Heart left ventricle (tissue), 16 donors: ENCODE measurements at regions of chr2 and their contacts with region 1.

Region 1: DNA sequence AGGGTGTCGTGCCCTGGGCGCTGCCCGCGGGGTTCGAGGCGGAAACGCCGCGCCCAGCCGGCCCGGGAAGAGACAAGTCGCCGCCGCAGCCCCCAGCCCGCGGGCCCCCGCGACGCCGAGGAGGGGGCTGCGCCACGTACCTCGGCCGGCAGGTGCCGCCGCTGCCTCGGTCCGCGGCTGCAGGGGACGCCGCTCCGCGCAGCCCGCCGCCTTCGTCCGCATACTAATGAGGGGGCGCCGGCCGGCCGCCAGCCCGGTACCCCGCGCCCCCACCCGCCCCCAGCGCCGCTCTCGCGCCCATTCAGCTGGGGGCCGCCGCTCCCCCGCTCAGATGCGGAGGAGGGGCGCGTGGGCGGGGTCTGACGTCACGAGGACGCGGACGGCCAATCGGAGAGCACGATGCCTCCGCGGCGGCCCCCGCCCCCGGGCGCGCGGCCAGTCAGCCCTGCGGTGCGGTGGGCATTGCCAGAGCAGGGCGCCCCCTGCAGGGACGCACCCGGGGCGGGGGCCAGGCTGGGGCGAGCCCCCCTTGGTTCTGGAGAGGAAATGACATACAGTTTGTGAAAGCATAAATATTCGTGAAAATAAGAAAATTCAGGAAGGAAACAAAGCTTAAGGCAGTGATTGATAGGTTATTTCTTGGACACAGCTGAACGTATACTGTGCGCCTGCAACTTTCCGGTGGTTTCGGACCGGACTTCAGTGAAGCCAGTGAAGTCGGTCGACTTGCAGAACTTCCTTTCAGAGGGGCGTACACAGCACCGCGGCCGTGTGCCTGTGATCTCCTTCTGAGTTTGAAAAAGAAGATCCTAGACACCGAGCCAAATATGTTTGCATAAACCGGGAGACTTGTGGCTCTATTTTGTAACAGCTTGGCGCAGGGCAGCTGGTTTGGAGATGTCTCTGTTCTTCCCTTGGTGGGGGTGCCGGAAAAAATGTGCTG is at the start of gene ST3GAL5:
- DNase-seq: peak; percentile 91 to 97 (median 93)
- ATAC-seq: peak; percentile 82 to 91 (median 84)
- H3K4me3 ChIP-seq: peak within 1 kb of the TSS; percentile 51 to 89 (median 72)
- H3K27ac ChIP-seq: peak within 1 kb of the TSS; percentile 52 to 94 (median 80)
- H3K4me1 ChIP-seq: peaks cover 0 to 73% (median 24%) of the 10 kb centered on the region in 12 donors
- H3K27me3 ChIP-seq: no peaks in the 10 kb centered on the region
- CTCF ChIP-seq: peak; percentile 38 to 82 (median 68)
- POLR2A ChIP-seq: peak in 1 of 2 donors; percentile 8
- total RNA-seq, gene ST3GAL5: 2.0 to 21.1 (median 4.0) TPM

Region 2: GRCh38 chr2:85826990-85827878 is 61.7 kb before region 1 on chr2:
- intact Hi-C with region 1: loop called in 8 of 10 experiments (anchors 2 to 10 kb)
- DNase-seq: peak; percentile 57 to 89 (median 66)
- ATAC-seq: peak; percentile 77 to 96 (median 94)
- H3K4me3 ChIP-seq: peak overlapping the region in 4 of 12 donors; percentile 17 to 24 (median 20)
- H3K27ac ChIP-seq: no peak overlapping the region
- H3K4me1 ChIP-seq: peaks cover 0 to 9% (median 5%) of the 10 kb centered on the region in 12 donors
- H3K27me3 ChIP-seq: no peaks in the 10 kb centered on the region
- CTCF ChIP-seq: peak; percentile 83 to 97 (median 92)
- POLR2A ChIP-seq: no peak

Region 3: DNA sequence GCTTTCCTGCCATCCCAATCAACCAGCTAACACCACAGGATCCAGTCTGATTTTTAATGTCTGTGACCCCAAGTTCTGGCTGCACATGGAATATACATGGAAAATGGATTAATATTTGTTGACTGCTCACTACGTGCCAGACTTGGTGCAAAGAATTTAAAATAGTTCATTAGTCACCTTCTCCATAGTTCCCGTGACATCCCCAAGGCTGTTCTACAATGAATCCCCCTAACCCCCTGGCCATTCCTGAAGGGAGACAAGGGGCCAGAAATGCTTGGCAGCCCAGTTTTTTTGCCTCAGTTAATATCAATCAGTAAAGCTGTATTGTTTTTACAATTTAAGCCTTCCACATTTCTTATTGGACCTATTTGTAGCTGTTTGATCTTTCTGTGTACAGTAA is 70.9 kb after region 1 on chr2:
- intact Hi-C with region 1: loop called in 1 of 10 experiments (anchors 2 kb)
- DNase-seq: no peak
- ATAC-seq: no peak
- H3K4me3 ChIP-seq: no peak overlapping the region
- H3K27ac ChIP-seq: peak overlapping the region in 1 of 12 donors; percentile 8
- H3K4me1 ChIP-seq: peaks cover 0 to 12% (median 0%) of the 10 kb centered on the region in 12 donors
- H3K27me3 ChIP-seq: no peaks in the 10 kb centered on the region
- CTCF ChIP-seq: no peak
- POLR2A ChIP-seq: no peak

Region 4: DNA sequence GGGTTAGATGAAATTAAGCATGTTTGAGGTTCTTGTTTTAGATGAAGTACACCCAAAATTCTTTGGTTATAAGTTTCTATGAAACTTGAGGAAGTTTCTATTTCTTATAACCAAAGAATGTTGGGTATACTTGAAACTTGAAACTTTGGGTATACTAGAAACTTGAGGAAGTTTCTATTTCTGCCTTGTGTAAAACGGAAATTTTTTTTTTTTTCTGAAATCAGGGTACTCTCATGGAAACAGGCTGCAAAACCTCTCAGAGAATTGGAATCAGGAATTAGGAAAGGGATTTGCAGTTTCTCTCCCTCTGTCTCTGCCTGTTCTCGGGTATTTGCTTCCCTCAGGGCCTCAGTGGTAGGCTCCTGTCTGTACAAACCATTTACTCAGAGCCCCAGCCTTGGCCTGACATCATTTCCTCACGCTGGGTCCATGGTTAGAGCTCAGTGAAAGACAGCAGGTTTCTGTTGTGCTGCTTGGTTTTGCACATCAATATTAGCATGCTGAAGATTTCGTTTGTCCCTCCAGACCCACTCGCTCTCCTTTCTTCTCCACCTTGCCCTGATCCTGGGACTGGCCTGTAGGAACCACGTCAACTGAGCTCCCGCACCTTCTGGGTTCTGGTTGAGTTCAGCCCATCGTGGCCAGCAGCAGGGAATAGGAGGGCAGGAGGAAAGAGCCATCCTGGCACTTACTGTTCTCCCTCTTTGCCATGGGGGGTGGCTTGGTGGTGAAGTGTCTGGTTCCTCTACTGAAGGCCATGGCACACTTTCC is 110.3 kb after region 1 on chr2:
- intact Hi-C with region 1: no loop called
- DNase-seq: no peak
- ATAC-seq: peak; percentile 22 to 58 (median 44)
- H3K4me3 ChIP-seq: peak overlapping the region in 1 of 12 donors; percentile 12
- H3K27ac ChIP-seq: peak overlapping the region; percentile 42 to 87 (median 71)
- H3K4me1 ChIP-seq: peaks cover 0 to 72% (median 50%) of the 10 kb centered on the region in 12 donors
- H3K27me3 ChIP-seq: no peaks in the 10 kb centered on the region
- CTCF ChIP-seq: no peak
- POLR2A ChIP-seq: no peak

Region 5: DNA sequence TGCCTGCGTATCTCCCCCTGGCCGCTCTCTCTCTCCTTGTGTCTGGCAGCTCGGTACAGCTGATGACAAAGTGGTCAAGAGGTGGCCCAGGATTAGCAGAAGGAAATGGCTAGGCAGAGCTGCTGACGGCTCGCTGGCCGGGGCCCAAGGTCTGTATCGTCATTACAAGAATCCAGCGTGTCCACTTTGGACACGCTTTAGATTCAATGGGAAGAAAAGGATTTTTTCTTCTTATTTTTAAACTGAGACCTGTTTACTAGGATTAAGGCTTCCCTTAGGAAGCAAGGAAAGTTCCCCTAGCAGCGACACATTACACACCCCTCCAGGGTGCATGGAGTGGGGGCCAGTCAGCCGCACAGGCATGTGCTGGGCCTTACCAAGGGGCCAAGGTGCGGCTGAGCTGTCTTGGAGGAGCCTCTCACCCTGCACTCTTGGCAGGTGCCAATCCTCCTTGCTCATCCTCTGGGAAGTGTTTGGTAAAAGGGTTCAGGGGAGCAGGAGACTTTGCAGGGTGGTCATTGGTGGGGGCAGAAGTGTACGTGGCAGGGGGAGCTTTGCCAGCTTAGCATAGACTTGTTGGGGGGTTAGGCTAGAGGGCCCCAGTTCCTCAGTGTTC is 139.9 kb after region 1 on chr2:
- intact Hi-C with region 1: loop called in 2 of 10 experiments (anchors 2 to 10 kb)
- DNase-seq: peak; percentile 91 to 96 (median 93)
- ATAC-seq: peak; percentile 92 to 98 (median 96)
- H3K4me3 ChIP-seq: peak overlapping the region in 1 of 12 donors; percentile 19
- H3K27ac ChIP-seq: peak overlapping the region in 11 of 12 donors; percentile 64 to 80 (median 69)
- H3K4me1 ChIP-seq: peaks cover 2 to 38% (median 20%) of the 10 kb centered on the region in 12 donors
- H3K27me3 ChIP-seq: no peaks in the 10 kb centered on the region
- CTCF ChIP-seq: no peak
- POLR2A ChIP-seq: no peak

Region 6: DNA sequence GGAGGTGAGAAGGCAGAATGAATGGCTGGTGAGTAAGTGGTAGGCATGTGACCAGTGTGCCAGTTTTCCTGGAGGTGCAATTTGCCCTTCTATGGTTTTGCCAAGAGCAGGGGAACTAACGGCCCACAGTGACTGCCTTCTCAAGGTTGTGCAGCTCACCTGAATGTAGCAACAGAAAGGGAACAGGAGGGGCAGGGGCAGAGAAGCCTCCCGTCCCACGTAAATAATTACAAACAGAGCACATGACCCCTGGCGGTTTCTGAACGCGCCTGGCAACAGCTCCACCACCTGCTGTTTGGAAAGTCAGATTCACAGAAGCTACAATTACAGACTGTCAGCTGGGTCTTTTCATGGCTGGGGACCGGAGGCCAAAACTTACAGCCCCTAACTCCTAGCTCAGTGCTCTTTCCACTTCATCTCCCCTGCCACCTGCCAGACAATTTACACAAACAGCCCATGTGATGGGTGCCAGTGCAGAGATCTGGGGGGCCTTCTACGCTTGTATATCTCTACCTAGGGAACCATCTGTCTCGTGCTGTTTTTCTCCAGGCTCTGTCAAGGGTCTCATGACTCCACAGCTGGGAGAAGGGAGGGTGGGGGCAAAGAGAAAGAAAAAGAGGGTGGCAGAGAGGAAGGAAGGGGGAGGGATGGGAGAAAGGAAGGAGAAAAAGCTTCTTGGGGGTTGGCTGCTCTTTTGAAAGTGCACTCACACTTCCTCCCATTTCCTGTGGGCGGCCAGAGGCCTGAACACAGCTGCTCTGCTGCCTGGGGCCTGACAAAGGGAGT is 147.1 kb after region 1 on chr2:
- intact Hi-C with region 1: loop called in 7 of 10 experiments (anchors 2 to 10 kb)
- DNase-seq: peak; percentile 82 to 92 (median 88)
- ATAC-seq: peak; percentile 78 to 84 (median 83)
- H3K4me3 ChIP-seq: no peak overlapping the region
- H3K27ac ChIP-seq: peak overlapping the region; percentile 72 to 97 (median 85)
- H3K4me1 ChIP-seq: peaks cover 19 to 57% (median 45%) of the 10 kb centered on the region in 12 donors
- H3K27me3 ChIP-seq: no peaks in the 10 kb centered on the region
- CTCF ChIP-seq: peak in 8 of 12 donors; percentile 5 to 22 (median 14)
- POLR2A ChIP-seq: no peak

Region 7: GRCh38 chr2:86072271-86072858 is 183.4 kb after region 1 on chr2:
- intact Hi-C with region 1: loop called in 6 of 10 experiments (anchors 2 to 5 kb)
- DNase-seq: peak; percentile 61 to 80 (median 66)
- ATAC-seq: peak; percentile 67 to 84 (median 80)
- H3K4me3 ChIP-seq: no peak overlapping the region
- H3K27ac ChIP-seq: peak overlapping the region in 11 of 12 donors; percentile 23 to 72 (median 61)
- H3K4me1 ChIP-seq: peaks cover 0 to 38% (median 16%) of the 10 kb centered on the region in 12 donors
- H3K27me3 ChIP-seq: no peaks in the 10 kb centered on the region
- CTCF ChIP-seq: no peak
- POLR2A ChIP-seq: no peak